ENCODE measurements at regions of chr6 and their contacts with region 1.

Region 1: DNA sequence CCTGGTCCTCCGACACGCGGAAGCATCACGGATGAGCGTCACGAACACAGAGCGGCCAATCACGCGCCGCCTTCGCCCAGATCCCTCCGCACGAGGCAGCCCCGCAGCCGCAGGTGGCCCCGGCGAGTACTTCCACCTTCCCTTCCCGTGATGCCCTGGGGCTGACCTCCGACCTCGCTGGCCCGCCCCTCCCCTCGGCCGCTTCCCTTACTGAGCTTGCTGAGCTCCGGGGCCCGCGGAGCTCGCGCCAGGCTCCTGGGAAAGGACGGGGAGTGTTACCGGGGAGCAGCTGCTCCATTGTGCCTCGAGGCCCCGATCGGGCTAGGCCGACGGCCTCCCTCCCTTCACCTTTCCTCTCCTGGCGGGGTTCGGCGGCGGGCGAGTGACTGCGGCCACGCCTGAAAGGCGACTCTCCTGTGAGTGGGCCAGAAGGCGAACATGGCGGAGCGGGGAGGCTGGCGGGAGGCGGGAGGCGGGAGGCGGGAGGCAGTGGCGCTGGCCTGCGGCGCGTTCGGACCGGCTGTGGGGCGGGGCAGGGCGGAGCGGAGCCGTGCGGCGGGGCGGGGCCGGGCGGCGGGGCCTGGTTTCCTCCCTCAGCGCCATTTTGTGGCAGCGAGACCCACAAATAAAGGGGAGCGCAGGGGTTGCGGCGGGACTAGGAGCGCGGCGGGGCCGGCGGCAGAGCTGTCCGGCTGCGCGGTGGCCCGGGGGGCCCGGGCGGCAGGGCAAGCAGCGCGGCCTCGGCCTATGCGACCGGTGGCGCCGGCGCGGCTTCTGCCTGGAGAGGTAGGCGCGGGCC is at the start of gene WTAP:
- DNase-seq: peak; percentile 86 to 98 (median 95)

Region 2: DNA sequence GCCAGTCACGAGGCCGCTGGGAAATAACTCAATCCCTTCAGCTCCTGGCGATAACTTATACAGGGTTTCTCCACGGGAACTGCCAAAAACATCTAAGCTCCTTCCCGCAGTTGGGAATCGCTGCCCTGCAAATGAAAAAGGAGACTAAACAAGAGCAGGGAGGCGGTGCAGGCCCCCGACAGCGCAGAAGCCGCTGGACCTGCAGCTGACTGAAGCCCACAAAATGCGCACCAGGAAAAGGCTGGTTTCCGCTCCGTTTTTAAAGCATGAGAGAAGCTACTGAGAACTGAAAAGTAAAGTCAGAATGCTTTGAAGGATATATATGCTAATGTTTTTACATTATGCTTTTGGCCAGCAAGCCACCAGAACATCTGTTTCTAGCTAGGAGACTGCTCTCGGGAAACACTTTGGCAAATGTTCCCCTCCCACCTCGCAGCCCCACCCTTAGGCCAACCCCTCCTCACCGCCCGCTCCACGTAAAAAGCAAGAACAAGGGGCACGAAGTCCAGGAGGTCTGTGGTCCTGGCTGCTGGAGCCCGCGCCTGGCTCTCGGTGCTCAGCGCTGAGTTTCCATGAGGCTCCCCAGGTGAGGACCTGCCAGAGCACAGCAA is 124.6 kb before region 1 on chr6:
- intact Hi-C with region 1: no loop called
- DNase-seq: no peak

Region 3: DNA sequence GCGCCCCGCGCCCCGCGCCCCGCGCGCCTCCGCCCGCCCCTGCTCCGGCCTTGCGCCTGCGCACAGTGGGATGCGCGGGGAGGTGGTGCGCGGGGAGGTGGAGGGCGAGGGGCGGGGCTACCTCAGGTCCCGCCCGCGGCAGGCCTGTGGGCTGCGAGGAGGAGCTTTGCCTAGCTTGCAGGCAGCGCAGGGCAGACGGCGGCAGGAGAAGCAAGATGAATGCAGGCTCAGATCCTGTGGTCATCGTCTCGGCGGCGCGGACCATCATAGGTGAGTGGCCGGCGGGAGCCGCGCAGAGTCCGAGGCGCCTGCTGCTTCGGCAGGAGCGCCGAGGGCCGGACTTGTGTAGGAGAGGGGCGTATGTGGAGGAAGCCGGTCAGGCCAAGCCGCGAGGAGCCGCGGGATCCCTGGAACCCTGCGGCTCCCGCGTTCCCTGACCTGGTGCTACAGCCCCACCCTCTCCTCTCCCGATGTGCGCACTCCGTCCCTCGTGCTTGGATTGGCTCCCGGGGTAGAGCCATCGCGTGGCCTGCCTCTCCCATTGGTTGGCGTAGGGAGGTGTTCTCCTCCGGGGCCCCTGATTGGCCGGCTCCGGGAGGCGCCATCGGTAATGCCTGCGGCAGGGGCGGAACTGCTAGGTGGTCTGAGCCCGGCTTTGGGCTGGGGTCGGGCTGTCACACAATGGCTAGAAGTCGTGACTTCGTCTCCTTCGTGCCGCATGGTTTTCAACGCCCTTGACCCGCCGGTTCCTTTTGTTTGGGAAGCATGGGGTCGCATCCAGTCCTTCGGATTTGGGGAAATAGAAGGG is 35.0 kb after region 1 on chr6 and contains the start of gene ACAT2:
- intact Hi-C with region 1: loop called (anchors 1 kb)
- DNase-seq: peak; percentile 96 to 100 (median 99)